ENCODE measurements at regions of chr17 and their contacts with region 1.

Region 1: DNA sequence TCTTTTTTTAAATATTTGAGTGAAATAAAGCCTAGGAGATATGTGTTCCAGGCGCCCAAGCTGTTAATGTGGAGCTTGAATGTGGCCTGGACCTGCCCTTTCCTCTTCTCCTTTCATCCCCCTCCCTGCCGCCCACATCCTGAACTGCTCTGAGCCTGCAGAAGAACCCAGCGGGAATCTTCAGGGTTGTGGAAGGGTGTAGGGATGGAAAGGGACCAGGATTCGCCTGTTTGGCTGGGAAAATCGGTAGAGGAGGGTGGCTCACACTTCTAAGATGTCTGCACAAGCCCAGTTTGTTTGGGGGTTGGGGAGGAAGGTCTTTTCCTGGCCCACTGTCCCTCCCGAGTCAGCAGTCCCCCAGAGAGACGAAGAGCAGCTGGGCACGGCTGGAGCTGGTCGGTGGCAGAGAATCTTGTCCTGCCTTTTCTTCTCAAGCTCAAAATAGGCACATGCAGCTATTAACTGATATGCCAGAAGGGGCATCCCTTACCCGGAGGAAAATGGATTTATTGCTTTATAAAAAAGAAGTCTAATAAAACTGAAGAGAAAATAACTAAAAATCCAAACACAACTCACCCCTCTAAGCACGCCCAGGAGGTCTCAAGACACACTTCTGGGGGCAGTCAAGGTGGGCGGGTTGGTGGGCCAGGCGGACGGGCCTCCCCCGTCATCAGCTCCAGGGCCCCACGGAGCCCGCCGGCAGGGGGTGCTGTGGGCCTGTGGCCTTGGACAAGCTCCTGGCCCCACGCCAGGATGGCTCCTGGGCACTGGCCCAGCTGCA is 11.5 kb upstream of the PITPNA start:
- DNase-seq: peak; percentile 87
- ATAC-seq: peak; percentile 70
- H3K4me3 Mint-ChIP-seq: no peak overlapping the region
- H3K27ac Mint-ChIP-seq: no peak overlapping the region
- H3K4me1 Mint-ChIP-seq: peaks cover 25% of the 10 kb centered on the region
- H3K27me3 Mint-ChIP-seq: no peaks in the 10 kb centered on the region
- CTCF ChIP-seq: no peak

Region 2: GRCh38 chr17:1561400-1562175 is 12.5 kb before region 1 on chr17:
- CTCF ChIA-PET with region 1: interaction called, 11 read pairs
- POLR2A ChIA-PET with region 1: interaction called, 5 read pairs
- intact Hi-C with region 1: no loop called
- DNase-seq: peak; percentile 54
- ATAC-seq: peak; percentile 26
- H3K4me3 Mint-ChIP-seq: peak overlapping the region; percentile 86
- H3K27ac Mint-ChIP-seq: peak overlapping the region; percentile 71
- H3K4me1 Mint-ChIP-seq: peaks cover 52% of the 10 kb centered on the region
- H3K27me3 Mint-ChIP-seq: no peaks in the 10 kb centered on the region
- CTCF ChIP-seq: no peak

Region 3: GRCh38 chr17:1590031-1590748 is 16.1 kb after region 1 on chr17:
- CTCF ChIA-PET with region 1: interaction called, 26 read pairs
- POLR2A ChIA-PET with region 1: interaction called, 71 read pairs
- intact Hi-C with region 1: loop called (anchors 1 kb)
- DNase-seq: no peak
- ATAC-seq: no peak
- H3K4me3 Mint-ChIP-seq: no peak overlapping the region
- H3K27ac Mint-ChIP-seq: peak overlapping the region; percentile 46
- H3K4me1 Mint-ChIP-seq: peaks cover 48% of the 10 kb centered on the region
- H3K27me3 Mint-ChIP-seq: no peaks in the 10 kb centered on the region
- CTCF ChIP-seq: no peak

Region 4: GRCh38 chr17:1606352-1607033 is 32.4 kb after region 1 on chr17:
- CTCF ChIA-PET with region 1: interaction called, 27 read pairs
- POLR2A ChIA-PET with region 1: interaction called, 39 read pairs
- intact Hi-C with region 1: loop called (anchors 1 kb)
- DNase-seq: no peak
- ATAC-seq: no peak
- H3K4me3 Mint-ChIP-seq: peak overlapping the region; percentile 67
- H3K27ac Mint-ChIP-seq: peak overlapping the region; percentile 86
- H3K4me1 Mint-ChIP-seq: peaks cover 36% of the 10 kb centered on the region
- H3K27me3 Mint-ChIP-seq: no peaks in the 10 kb centered on the region
- CTCF ChIP-seq: no peak

Region 5: DNA sequence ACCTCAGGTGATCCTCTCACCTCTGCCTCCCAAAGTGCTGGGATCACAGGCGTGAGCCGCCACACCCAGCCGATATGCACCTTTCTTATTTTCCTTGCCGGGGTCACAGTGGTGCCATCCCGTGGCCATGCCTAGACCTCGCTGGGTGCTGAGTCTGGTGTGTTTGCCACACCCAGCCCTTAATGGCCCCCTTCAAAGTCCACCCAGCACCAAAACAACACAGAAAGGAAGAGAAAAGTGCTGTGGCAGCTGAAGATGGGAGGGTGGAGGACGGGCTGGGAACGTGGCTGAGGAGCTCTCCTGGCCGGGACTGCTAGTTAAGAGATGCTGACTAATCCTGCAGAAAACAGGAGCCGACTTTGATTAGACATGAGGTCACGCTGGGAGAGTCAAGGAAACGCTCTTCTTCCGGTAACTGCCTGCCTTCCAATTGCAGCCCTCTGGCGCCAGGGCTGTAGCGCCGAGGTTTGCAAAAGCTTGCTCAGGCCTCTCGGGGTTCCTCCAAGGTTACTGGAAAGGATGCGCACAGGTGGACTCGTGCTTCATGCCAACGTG is 43.6 kb after region 1 on chr17:
- CTCF ChIA-PET with region 1: interaction called, 13 read pairs
- POLR2A ChIA-PET with region 1: interaction called, 8 read pairs
- intact Hi-C with region 1: no loop called
- DNase-seq: no peak
- ATAC-seq: no peak
- H3K4me3 Mint-ChIP-seq: no peak overlapping the region
- H3K27ac Mint-ChIP-seq: peak overlapping the region; percentile 30
- H3K4me1 Mint-ChIP-seq: peaks cover 5% of the 10 kb centered on the region
- H3K27me3 Mint-ChIP-seq: no peaks in the 10 kb centered on the region
- CTCF ChIP-seq: no peak

Region 6: DNA sequence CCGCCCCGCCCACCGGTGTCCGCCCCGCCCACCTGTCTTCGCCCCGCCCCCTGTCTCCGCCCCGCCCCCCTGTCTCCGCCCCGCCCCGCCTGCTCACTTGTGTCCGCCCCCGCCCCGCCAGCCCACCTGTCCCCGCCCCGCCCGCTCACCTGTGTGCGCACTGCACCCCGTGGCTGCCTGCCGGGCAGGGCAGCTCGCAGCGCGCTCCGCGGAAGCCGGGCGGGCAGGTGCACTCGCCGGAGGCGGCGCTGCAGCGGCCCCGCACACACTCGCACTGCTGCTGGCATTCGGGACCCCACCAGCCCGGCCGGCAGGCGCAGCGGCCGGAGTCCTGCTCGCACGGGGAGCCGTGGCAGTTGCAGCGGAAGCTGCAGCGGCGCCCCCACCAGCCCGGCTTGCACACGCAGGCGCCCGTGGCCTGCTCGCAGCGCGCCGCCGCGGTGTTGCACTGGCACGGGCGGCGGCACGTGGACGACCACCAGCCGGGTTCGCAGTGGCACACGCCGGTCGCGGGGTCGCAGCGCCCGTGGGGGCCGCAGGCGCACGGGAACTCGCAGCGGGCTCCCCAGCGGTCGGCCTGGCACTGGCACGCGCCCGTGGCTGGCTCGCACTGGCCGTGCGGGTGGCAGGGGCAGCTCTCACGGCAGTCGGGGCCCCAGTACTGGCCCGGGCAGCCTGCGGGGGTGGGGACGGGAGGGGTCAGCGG is 69.3 kb after region 1 on chr17:
- CTCF ChIA-PET with region 1: interaction called, 82 read pairs
- POLR2A ChIA-PET with region 1: interaction called, 30 read pairs
- intact Hi-C with region 1: loop called (anchors 1 kb)
- DNase-seq: peak; percentile 55
- ATAC-seq: peak; percentile 35
- H3K4me3 Mint-ChIP-seq: peak overlapping the region; percentile 85
- H3K27ac Mint-ChIP-seq: no peak overlapping the region
- H3K4me1 Mint-ChIP-seq: peaks cover 41% of the 10 kb centered on the region
- H3K27me3 Mint-ChIP-seq: no peaks in the 10 kb centered on the region
- CTCF ChIP-seq: no peak